HEK293 (cell line): ENCODE measurements at regions of chr6 and their contacts with region 1.

Region 1: GRCh38 chr6:24283043-24283985 is 74.5 kb downstream of the DCDC2 start:
- H3K4me3 ChIP-seq: no peak overlapping the region
- H3K27ac ChIP-seq: no peak overlapping the region
- H3K4me1 ChIP-seq: peaks cover 7% of the 10 kb centered on the region; the same call in 1 of the 2 replicates
- CTCF ChIP-seq: peak; percentile 82

Region 2: GRCh38 chr6:23301556-23301955 is 981.8 kb before region 1 on chr6:
- CTCF ChIA-PET with region 1: no interaction called
- POLR2A ChIA-PET with region 1: no interaction called
- H3K4me3 ChIP-seq: no peak overlapping the region
- H3K27ac ChIP-seq: no peak overlapping the region
- H3K4me1 ChIP-seq: no peaks in the 10 kb centered on the region
- CTCF ChIP-seq: no peak

Region 3: GRCh38 chr6:24228681-24229255 is 54.5 kb before region 1 on chr6:
- CTCF ChIA-PET with region 1: no interaction called
- POLR2A ChIA-PET with region 1: no interaction called
- H3K4me3 ChIP-seq: no peak overlapping the region
- H3K27ac ChIP-seq: no peak overlapping the region
- H3K4me1 ChIP-seq: no peaks in the 10 kb centered on the region
- CTCF ChIP-seq: no peak

Region 4: DNA sequence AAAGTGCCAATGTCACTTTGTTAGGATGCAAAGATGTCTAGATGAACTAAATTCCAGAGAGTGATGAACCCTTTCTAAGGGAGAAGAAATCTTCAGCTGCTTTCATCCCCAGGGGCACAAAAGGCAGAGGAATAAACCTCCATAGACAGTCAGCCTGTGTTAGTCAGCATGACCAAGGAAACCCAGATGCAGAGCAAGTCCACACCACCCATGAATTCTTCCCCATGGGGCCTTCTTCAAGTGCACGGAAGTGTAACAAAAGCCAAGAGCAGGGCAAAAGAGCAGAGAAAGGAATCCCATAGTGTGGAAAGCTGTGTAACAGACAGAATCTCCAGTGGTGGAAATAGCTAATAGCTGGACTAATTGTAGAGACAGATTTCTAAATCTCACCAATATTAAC is 24.6 kb after region 1 on chr6:
- CTCF ChIA-PET with region 1: interaction called, 12 read pairs
- POLR2A ChIA-PET with region 1: no interaction called
- H3K4me3 ChIP-seq: no peak overlapping the region
- H3K27ac ChIP-seq: no peak overlapping the region
- H3K4me1 ChIP-seq: no peaks in the 10 kb centered on the region
- CTCF ChIP-seq: no peak

Region 5: DNA sequence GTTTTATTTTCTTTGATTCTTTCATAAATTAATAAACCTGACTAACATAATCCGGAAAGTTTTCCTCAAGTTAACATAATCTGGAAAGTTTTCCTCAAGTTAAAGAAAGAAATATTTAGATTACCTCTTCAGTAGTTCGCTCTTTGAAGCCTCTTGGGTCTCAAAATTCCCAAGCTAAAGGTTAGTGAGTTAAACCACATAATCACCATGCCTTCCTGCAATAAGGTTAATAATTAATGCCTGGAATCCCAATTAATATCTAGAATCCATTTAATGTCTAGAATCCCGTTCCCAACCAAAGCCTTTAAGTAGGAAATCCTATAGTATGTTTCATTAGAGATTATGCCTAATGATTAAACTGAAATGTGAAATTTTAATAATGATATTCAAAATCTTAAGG is 61.7 kb after region 1 on chr6:
- CTCF ChIA-PET with region 1: interaction called, 10 read pairs
- POLR2A ChIA-PET with region 1: no interaction called
- H3K4me3 ChIP-seq: no peak overlapping the region
- H3K27ac ChIP-seq: no peak overlapping the region
- H3K4me1 ChIP-seq: no peaks in the 10 kb centered on the region
- CTCF ChIP-seq: no peak

Region 6: DNA sequence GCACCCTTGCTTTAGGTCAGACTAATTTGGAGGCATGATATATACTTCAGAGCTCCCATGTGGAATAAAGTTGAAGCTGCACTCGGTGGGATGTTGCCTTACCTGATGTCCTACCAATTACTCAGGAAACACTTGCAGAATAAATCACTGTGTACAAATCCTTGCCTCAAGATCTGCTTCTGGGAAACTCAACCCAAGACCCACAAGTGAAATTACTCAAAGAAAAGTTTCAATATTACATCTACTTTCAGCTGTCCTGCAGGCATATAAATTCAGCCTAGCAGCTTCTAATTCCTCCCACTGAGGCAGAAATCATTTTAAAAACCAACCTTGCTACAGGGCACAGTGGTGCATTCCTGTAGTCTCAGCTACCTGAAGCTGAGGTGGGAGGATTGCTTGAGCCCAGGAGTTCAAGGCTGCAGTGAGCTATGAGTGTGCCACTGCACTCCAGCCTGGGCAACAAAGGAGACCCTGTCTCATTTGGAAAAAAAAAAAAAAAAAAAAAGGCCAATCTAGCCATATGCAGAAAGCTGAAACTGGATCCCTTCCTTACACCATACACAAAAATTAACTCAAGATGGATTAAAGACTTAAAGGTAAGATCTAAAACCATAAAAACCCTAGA is 95.3 kb after region 1 on chr6:
- CTCF ChIA-PET with region 1: interaction called, 14 read pairs
- POLR2A ChIA-PET with region 1: interaction called, 4 read pairs
- H3K4me3 ChIP-seq: no peak overlapping the region
- H3K27ac ChIP-seq: no peak overlapping the region
- H3K4me1 ChIP-seq: no peaks in the 10 kb centered on the region; the same call in 1 of the 2 replicates
- CTCF ChIP-seq: no peak

Region 7: GRCh38 chr6:24408719-24409410 is 125.6 kb after region 1 on chr6:
- CTCF ChIA-PET with region 1: interaction called, 15 read pairs
- POLR2A ChIA-PET with region 1: no interaction called
- H3K4me3 ChIP-seq: no peak overlapping the region
- H3K27ac ChIP-seq: no peak overlapping the region
- H3K4me1 ChIP-seq: no peaks in the 10 kb centered on the region
- CTCF ChIP-seq: no peak